Naive thymus-derived CD4-positive, alpha-beta T cell (primary cell): ENCODE measurements at regions of chr18 and their contacts with region 1.

Region 1: GRCh38 chr18:9913526-9914333 is at the start of gene VAPA:
- DNase-seq: peak; percentile 92 to 98 (median 95)
- ATAC-seq: peak; percentile 90
- H3K4me3 ChIP-seq: peak within 1 kb of the TSS; percentile 99
- H3K4me3 Mint-ChIP-seq: peak within 1 kb of the TSS; percentile 89 to 96 (median 93)
- H3K27ac ChIP-seq: peak within 1 kb of the TSS; percentile 98
- H3K27ac Mint-ChIP-seq: peak within 1 kb of the TSS; percentile 85 to 98 (median 96)
- H3K4me1 ChIP-seq: peaks cover 34% of the 10 kb centered on the region in 2 donors
- H3K4me1 Mint-ChIP-seq: peaks cover 18 to 33% (median 28%) of the 10 kb centered on the region in 7 donors
- H3K27me3 ChIP-seq: no peaks in the 10 kb centered on the region
- H3K27me3 Mint-ChIP-seq: peaks cover 0 to 19% (median 0%) of the 10 kb centered on the region in 5 donors
- total RNA-seq, gene VAPA: 109 to 199 (median 151) TPM

Region 2: DNA sequence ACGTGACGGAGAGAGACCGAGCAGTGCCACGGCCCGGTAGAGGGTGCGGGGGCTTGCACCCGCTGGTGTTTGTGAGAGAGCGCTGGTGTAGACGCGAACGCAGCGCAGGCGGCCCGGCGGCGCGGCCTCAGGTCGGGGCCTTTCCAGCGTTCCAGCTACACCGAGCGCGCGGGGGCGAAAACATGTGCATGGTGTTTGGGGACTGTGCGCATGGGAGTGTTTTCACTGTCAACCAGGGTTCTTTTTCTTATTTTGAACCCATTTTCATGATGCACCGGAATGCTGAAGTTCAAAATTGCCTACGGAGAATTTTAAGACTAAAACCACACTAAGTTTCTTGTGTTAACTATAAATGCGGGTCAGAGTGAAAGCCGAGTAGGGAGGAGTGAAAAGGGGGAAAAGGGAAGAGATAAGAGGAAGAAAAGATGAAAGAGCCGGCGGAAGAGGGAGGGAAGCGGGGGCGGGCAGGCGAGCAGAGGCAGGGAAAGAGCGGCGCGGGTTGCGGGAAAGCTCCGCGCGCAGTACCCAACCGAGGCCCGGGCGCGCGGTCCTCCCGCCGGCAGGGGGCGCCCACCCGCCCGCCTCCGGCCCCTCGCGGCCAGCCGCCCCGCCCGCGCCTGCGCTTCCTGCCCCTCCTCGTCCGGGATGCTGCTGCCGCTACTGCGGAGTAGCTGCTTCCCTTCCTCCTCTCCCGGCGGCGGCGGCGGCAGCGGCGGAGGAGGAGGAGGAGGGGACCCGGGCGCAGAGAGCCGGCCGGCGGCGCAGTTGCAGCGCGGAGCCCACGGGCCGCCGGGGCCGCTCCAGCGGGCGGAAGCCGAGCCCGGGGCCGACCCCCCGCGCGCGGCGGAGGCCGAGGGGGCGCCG is 1304.7 kb before region 1 on chr18 and contains the start of gene RAB12:
- CTCF ChIA-PET with region 1: no interaction called
- POLR2A ChIA-PET with region 1: interaction called, 3 read pairs
- intact Hi-C with region 1: loop called (anchors 1 to 5 kb)
- DNase-seq: peak; percentile 76 to 93 (median 87)
- ATAC-seq: peak; percentile 97
- H3K4me3 ChIP-seq: peak within 1 kb of the TSS; percentile 78
- H3K4me3 Mint-ChIP-seq: peak within 1 kb of the TSS; percentile 88 to 97 (median 94)
- H3K27ac ChIP-seq: peak within 1 kb of the TSS; percentile 76
- H3K27ac Mint-ChIP-seq: peak within 1 kb of the TSS; percentile 91 to 99 (median 96)
- H3K4me1 ChIP-seq: peaks cover 18 to 29% of the 10 kb centered on the region in 2 donors
- H3K4me1 Mint-ChIP-seq: peaks cover 42 to 63% (median 56%) of the 10 kb centered on the region in 7 donors
- H3K27me3 ChIP-seq: no peaks in the 10 kb centered on the region
- H3K27me3 Mint-ChIP-seq: peaks cover 0 to 16% (median 7%) of the 10 kb centered on the region in 5 donors
- total RNA-seq, gene RAB12: 19.8 to 26.2 (median 23.0) TPM

Region 3: DNA sequence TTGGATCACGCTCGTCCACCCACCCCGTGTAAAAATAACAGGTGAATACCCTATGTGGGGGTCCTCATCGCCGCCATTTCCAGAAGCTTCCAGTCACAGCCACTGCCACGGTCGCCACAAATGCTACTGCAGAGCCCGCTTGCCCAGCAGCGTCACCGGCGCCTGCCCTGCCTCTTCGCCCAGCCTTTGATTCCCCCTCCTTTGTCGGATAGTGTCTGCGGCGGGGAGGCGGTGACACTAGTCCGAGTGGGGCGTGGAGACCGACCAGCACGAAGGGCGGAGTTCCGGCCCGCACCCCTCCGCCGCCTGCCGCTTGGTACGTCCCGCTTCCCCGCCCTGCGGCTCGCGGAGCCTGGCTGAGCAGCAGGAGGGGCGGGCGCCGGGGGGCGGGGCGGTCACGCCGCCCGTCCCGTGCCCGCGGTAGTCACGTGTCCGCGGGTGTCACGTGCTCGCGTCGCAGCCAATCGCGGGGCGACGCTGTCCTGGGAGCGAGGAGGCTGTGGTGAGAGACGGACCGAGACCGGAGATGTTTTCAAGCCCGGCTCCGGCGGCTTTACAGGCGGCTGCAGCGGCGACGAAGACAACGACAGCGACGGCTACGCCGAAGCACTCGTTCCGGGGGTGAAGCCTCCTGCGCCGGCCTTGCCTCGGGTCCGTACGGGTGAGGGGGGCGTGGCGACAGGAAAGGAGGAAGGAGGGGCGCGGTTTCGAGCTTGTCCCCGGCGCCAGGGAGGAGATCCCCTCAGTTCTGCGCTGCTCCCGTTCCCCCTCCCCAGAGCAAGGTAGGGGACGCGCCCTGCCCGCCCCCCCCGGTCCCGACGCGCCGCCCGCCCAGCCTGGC is 777.2 kb before region 1 on chr18 and contains the start of gene ANKRD12:
- CTCF ChIA-PET with region 1: no interaction called
- POLR2A ChIA-PET with region 1: interaction called, 3 read pairs
- intact Hi-C with region 1: loop called in 1 of 2 experiments (anchors 1 kb)
- DNase-seq: peak; percentile 93 to 98 (median 96)
- ATAC-seq: peak; percentile 89
- H3K4me3 ChIP-seq: peak within 1 kb of the TSS; percentile 86
- H3K4me3 Mint-ChIP-seq: peak within 1 kb of the TSS; percentile 95 to 99 (median 98)
- H3K27ac ChIP-seq: peak within 1 kb of the TSS; percentile 88
- H3K27ac Mint-ChIP-seq: peak within 1 kb of the TSS; percentile 95 to 99 (median 98)
- H3K4me1 ChIP-seq: peaks cover 42 to 50% of the 10 kb centered on the region in 2 donors
- H3K4me1 Mint-ChIP-seq: peaks cover 45 to 75% (median 69%) of the 10 kb centered on the region in 7 donors
- H3K27me3 ChIP-seq: no peaks in the 10 kb centered on the region
- H3K27me3 Mint-ChIP-seq: no peaks in the 10 kb centered on the region
- total RNA-seq, gene ANKRD12: 98.9 to 274 (median 204) TPM

Region 4: GRCh38 chr18:9925369-9925768 is 11.6 kb after region 1 on chr18:
- CTCF ChIA-PET with region 1: interaction called, 3 read pairs
- POLR2A ChIA-PET with region 1: interaction called, 18 read pairs
- intact Hi-C with region 1: loop called in 1 of 2 experiments (anchors 1 kb)
- DNase-seq: no peak
- ATAC-seq: no peak
- H3K4me3 ChIP-seq: no peak overlapping the region
- H3K4me3 Mint-ChIP-seq: peak overlapping the region in 6 of 10 donors; percentile 7 to 69 (median 42)
- H3K27ac ChIP-seq: no peak overlapping the region
- H3K27ac Mint-ChIP-seq: no peak overlapping the region
- H3K4me1 ChIP-seq: peaks cover 57 to 59% of the 10 kb centered on the region in 2 donors
- H3K4me1 Mint-ChIP-seq: peaks cover 3 to 72% (median 49%) of the 10 kb centered on the region in 7 donors
- H3K27me3 ChIP-seq: no peaks in the 10 kb centered on the region
- H3K27me3 Mint-ChIP-seq: no peaks in the 10 kb centered on the region

Region 5: GRCh38 chr18:10525371-10526210 is 611.9 kb after region 1 on chr18 and contains the start of gene NAPG:
- CTCF ChIA-PET with region 1: no interaction called
- POLR2A ChIA-PET with region 1: interaction called, 5 read pairs
- intact Hi-C with region 1: loop called (anchors 1 kb)
- DNase-seq: peak; percentile 88 to 94 (median 91)
- ATAC-seq: peak; percentile 94
- H3K4me3 ChIP-seq: peak within 1 kb of the TSS; percentile 93
- H3K4me3 Mint-ChIP-seq: peak within 1 kb of the TSS; percentile 94 to 99 (median 98)
- H3K27ac ChIP-seq: peak within 1 kb of the TSS; percentile 76
- H3K27ac Mint-ChIP-seq: peak within 1 kb of the TSS; percentile 84 to 99 (median 96)
- H3K4me1 ChIP-seq: peaks cover 4 to 22% of the 10 kb centered on the region in 2 donors
- H3K4me1 Mint-ChIP-seq: peaks cover 43 to 62% (median 53%) of the 10 kb centered on the region in 7 donors
- H3K27me3 ChIP-seq: no peaks in the 10 kb centered on the region
- H3K27me3 Mint-ChIP-seq: peaks cover 0 to 10% (median 0%) of the 10 kb centered on the region in 5 donors
- total RNA-seq, gene NAPG: 28.1 to 35.7 (median 30.0) TPM

Region 6: DNA sequence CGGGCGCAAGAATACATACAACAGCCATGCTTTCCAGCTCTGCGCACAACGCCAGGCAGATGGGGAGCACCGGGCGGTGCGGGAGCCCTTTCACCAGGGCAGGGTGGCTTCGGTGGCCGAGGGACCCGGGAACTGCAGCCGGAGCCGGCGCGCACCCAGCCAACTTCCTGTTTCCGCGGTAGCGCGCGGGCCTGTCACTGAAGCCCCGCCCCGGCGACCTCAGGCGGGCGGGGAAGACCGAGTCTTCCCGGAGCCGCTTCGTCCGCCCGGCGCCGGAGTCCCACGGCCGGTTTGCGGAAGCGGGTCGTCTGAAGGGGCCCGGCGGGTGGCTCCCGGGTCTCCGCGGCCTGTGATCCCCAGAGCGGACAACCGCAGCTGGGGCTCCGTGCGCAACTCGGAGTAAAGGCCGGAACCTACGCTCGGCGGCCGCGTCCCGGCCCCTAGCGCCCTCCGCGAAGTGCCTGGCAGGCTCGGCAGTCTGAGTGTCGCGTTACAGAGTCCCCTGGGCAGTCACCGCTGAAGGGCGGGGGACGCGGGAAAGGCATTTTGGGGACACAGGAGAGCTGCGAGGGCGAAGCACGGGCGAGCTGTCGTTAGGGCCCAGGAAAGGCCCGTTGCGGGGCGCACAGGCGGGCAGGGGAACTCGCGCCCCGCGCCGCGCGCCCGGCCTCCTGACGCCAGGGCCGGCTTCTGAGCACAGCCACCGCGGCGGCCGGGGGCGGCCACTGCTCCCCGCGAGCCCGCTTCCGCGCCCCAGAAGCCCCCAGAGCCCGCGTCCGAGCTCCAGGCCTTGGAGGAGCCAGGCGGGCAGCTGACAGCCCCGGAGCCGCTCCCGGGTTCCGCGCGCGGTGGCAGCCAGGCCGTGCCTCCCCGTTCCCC is 1994.7 kb after region 1 on chr18 and contains the start of gene MPPE1:
- CTCF ChIA-PET with region 1: no interaction called
- POLR2A ChIA-PET with region 1: no interaction called
- intact Hi-C with region 1: loop called in 1 of 2 experiments (anchors 5 kb)
- DNase-seq: peak; percentile 77 to 88 (median 83)
- ATAC-seq: peak; percentile 95
- H3K4me3 ChIP-seq: peak within 1 kb of the TSS; percentile 94
- H3K4me3 Mint-ChIP-seq: peak within 1 kb of the TSS; percentile 90 to 97 (median 96)
- H3K27ac ChIP-seq: peak within 1 kb of the TSS; percentile 97
- H3K27ac Mint-ChIP-seq: peak within 1 kb of the TSS; percentile 93 to 97 (median 95)
- H3K4me1 ChIP-seq: peaks cover 8 to 9% of the 10 kb centered on the region in 2 donors
- H3K4me1 Mint-ChIP-seq: peaks cover 10 to 32% (median 24%) of the 10 kb centered on the region in 7 donors
- H3K27me3 ChIP-seq: no peaks in the 10 kb centered on the region
- H3K27me3 Mint-ChIP-seq: no peaks in the 10 kb centered on the region
- total RNA-seq, gene MPPE1: 61.9 to 88.0 (median 86.2) TPM